ENCODE measurements at regions of chr3 and their contacts with region 1.

Region 1: GRCh38 chr3:50358911-50359759 is at the start of gene TMEM115:
- DNase-seq: peak; percentile 97
- ATAC-seq: peak; percentile 100
- H3K4me3 Mint-ChIP-seq: peak within 1 kb of the TSS; percentile 91
- H3K27ac Mint-ChIP-seq: peak within 1 kb of the TSS; percentile 94
- H3K4me1 Mint-ChIP-seq: peaks cover 37% of the 10 kb centered on the region
- H3K27me3 Mint-ChIP-seq: no peaks in the 10 kb centered on the region
- total RNA-seq, gene TMEM115: 13.1 to 16.1 TPM

Region 2: GRCh38 chr3:49689046-49689907 is 669.9 kb before region 1 on chr3 and contains the starts of genes MST1 and RNF123:
- CTCF ChIA-PET with region 1: no interaction called
- POLR2A ChIA-PET with region 1: no interaction called
- intact Hi-C with region 1: loop called in 1 of 2 experiments (anchors 5 kb)
- DNase-seq: peak; percentile 95
- ATAC-seq: peak; percentile 74
- H3K4me3 Mint-ChIP-seq: peak within 1 kb of the TSS; percentile 90
- H3K27ac Mint-ChIP-seq: peak within 1 kb of the TSS; percentile 90
- H3K4me1 Mint-ChIP-seq: peaks cover 30% of the 10 kb centered on the region
- H3K27me3 Mint-ChIP-seq: no peaks in the 10 kb centered on the region
- total RNA-seq, gene MST1: 8.7 to 9.7 TPM
- total RNA-seq, gene RNF123: 25.2 to 32.7 TPM

Region 3: DNA sequence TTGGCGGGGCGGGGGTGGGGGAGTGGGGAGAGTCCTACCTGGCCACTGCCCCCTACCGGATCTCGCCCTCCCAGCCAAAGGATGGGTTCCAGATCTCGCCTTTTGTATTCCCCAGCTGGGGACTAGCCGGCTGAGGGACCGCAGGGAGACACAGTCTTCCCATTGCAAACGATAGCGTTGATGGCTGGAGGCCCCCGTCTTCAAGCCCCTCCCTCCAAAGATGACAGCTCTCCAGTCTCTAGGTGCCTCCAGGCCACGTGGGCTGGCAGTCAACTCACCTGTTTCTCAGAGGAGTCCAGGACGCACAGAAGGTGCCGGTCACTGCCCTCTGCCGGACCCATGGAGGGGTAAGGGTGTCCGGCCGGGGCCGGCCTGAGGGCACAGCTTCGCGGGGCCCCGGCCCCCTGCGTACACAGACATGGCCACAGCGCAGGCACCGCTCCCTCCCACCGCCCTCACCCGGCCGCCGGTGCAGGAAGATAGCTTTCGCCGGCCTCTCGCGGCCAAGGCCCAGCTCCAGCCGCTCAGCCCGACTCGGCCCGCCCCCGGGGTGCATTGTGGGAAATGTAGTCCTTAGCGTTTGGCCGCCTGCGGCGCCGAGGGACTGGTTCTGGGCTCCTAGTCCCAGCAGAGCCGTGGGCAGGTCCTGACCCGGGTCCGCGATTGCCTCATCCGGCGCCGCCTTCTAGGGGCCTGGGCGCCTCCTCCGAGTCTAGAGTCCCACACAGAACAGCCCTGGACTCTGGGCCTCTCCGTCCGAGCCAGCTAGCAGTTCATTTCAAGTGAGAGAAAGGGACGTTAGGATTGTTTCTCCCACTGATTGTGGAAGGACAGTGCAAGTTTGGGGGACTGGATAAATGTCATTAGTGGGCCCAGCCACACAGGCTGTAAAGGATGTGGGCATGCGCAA is 429.5 kb before region 1 on chr3 and contains the start of gene MON1A:
- CTCF ChIA-PET with region 1: no interaction called
- POLR2A ChIA-PET with region 1: no interaction called
- intact Hi-C with region 1: loop called in 1 of 2 experiments (anchors 10 kb)
- DNase-seq: peak; percentile 92
- ATAC-seq: peak; percentile 97
- H3K4me3 Mint-ChIP-seq: peak within 1 kb of the TSS; percentile 85
- H3K27ac Mint-ChIP-seq: peak within 1 kb of the TSS; percentile 90
- H3K4me1 Mint-ChIP-seq: peaks cover 19% of the 10 kb centered on the region
- H3K27me3 Mint-ChIP-seq: no peaks in the 10 kb centered on the region
- total RNA-seq, gene MON1A: 7.5 to 8.3 TPM

Region 4: GRCh38 chr3:50088725-50089608 is 270.2 kb before region 1 on chr3 and contains the start of gene RBM5:
- CTCF ChIA-PET with region 1: no interaction called
- POLR2A ChIA-PET with region 1: no interaction called
- intact Hi-C with region 1: loop called in 1 of 2 experiments (anchors 1 kb)
- DNase-seq: peak; percentile 97
- ATAC-seq: peak; percentile 100
- H3K4me3 Mint-ChIP-seq: peak within 1 kb of the TSS; percentile 99
- H3K27ac Mint-ChIP-seq: peak within 1 kb of the TSS; percentile 97
- H3K4me1 Mint-ChIP-seq: peaks cover 28% of the 10 kb centered on the region
- H3K27me3 Mint-ChIP-seq: no peaks in the 10 kb centered on the region
- total RNA-seq, gene RBM5: 118 to 131 TPM

Region 5: GRCh38 chr3:50272911-50273693 is 86.0 kb before region 1 on chr3:
- CTCF ChIA-PET with region 1: no interaction called
- POLR2A ChIA-PET with region 1: no interaction called
- intact Hi-C with region 1: no loop called
- DNase-seq: peak; percentile 96
- ATAC-seq: peak; percentile 87
- H3K4me3 Mint-ChIP-seq: peak overlapping the region; percentile 68
- H3K27ac Mint-ChIP-seq: peak overlapping the region; percentile 58
- H3K4me1 Mint-ChIP-seq: peaks cover 25% of the 10 kb centered on the region
- H3K27me3 Mint-ChIP-seq: peaks cover 37% of the 10 kb centered on the region

Region 6: GRCh38 chr3:50337191-50337841 is 21.8 kb before region 1 on chr3:
- CTCF ChIA-PET with region 1: interaction called, 9 read pairs
- POLR2A ChIA-PET with region 1: interaction called, 5 read pairs
- intact Hi-C with region 1: loop called in 1 of 2 experiments (anchors 1 kb)
- DNase-seq: peak; percentile 99
- ATAC-seq: peak; percentile 82
- H3K4me3 Mint-ChIP-seq: peak overlapping the region; percentile 83
- H3K27ac Mint-ChIP-seq: peak overlapping the region; percentile 91
- H3K4me1 Mint-ChIP-seq: peaks cover 50% of the 10 kb centered on the region
- H3K27me3 Mint-ChIP-seq: no peaks in the 10 kb centered on the region

Region 7: DNA sequence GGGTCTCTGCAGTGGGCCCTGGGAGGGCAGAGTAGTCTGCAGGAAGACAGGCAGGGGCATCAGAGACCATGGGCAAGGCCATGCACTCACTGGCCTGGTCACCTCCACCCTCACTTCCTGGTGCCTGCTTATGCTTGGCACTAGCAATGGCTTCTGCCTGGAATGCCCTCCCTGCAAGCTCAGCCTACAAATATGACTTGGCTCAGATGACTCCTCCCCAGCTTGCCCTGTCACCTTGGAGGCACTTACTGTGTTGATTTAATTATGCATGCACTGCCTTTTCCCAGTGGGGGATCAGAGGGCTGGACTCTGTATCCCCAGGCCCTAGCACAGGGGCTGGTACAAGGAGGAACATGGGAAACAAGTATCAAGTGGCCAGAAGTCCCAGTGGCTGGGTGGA is 200.6 kb after region 1 on chr3:
- CTCF ChIA-PET with region 1: no interaction called
- POLR2A ChIA-PET with region 1: no interaction called
- intact Hi-C with region 1: no loop called
- DNase-seq: no peak
- ATAC-seq: no peak
- H3K4me3 Mint-ChIP-seq: no peak overlapping the region
- H3K27ac Mint-ChIP-seq: no peak overlapping the region
- H3K4me1 Mint-ChIP-seq: peaks cover 8% of the 10 kb centered on the region
- H3K27me3 Mint-ChIP-seq: no peaks in the 10 kb centered on the region

Region 8: GRCh38 chr3:51384726-51385473 is 1025.8 kb after region 1 on chr3 and contains the start of gene MANF:
- CTCF ChIA-PET with region 1: no interaction called
- POLR2A ChIA-PET with region 1: no interaction called
- intact Hi-C with region 1: loop called in 1 of 2 experiments (anchors 1 kb)
- DNase-seq: peak; percentile 99
- ATAC-seq: peak; percentile 97
- H3K4me3 Mint-ChIP-seq: peak within 1 kb of the TSS; percentile 93
- H3K27ac Mint-ChIP-seq: peak within 1 kb of the TSS; percentile 99
- H3K4me1 Mint-ChIP-seq: peaks cover 46% of the 10 kb centered on the region
- H3K27me3 Mint-ChIP-seq: no peaks in the 10 kb centered on the region
- total RNA-seq, gene MANF: 124 to 129 TPM